CD4-positive, alpha-beta T cell (primary cell): ENCODE measurements at regions of chr19 and their contacts with region 1.

Region 1: DNA sequence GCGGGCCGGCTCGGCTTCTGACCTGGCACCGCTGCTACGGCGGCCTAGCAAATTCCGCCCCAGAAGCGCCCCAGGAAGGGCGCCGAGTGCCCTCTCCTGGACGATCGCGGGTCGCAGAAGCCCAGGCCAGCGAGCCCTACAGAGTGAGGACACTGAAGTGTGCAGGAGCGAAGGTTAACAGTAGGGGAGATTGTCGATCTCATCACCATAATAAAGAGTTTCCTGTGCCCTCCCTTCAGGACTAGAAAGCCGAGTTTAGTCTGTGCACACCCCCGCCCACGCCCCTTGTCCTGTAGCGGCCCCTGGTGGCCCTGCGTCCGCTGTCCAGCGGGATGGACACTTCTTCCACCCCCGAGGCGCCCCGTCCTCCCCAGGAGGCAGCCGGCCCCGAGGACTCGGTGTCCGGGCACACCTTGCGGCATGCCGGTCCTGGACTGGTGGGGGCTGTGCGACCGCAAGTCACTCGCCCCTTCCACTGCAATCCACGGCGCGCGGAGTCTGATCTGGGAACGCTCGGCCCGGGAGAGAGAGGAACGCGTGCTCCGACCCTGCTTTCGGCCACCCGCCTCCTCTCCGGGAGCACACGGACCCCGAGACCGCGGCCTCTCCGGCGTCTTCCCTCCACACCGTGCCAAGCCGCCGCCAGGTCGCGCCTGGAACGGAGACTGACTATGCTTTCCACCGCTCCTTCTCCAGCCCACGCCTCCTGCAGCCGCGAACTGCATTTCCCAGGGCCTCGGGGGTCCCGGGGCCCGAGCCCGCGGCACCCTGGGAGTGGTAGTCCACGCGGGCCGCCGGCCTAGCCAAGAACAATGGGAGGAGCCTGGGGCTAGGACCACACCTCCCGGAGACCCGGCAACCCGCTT is 769 bp upstream of the KMT2B start:
- DNase-seq: peak; percentile 92 to 99 (median 96)
- ATAC-seq: peak; percentile 85
- H3K4me3 ChIP-seq: peak overlapping the region; percentile 96
- H3K4me3 Mint-ChIP-seq: peak overlapping the region; percentile 93
- H3K27ac ChIP-seq: peak overlapping the region; percentile 73 to 76
- H3K27ac Mint-ChIP-seq: peak overlapping the region; percentile 89
- H3K4me1 ChIP-seq: peaks cover 71% of the 10 kb centered on the region
- H3K4me1 Mint-ChIP-seq: peaks cover 70% of the 10 kb centered on the region
- H3K27me3 ChIP-seq: no peaks in the 10 kb centered on the region
- H3K27me3 Mint-ChIP-seq: no peaks in the 10 kb centered on the region
- CTCF ChIP-seq: peak; percentile 95

Region 2: DNA sequence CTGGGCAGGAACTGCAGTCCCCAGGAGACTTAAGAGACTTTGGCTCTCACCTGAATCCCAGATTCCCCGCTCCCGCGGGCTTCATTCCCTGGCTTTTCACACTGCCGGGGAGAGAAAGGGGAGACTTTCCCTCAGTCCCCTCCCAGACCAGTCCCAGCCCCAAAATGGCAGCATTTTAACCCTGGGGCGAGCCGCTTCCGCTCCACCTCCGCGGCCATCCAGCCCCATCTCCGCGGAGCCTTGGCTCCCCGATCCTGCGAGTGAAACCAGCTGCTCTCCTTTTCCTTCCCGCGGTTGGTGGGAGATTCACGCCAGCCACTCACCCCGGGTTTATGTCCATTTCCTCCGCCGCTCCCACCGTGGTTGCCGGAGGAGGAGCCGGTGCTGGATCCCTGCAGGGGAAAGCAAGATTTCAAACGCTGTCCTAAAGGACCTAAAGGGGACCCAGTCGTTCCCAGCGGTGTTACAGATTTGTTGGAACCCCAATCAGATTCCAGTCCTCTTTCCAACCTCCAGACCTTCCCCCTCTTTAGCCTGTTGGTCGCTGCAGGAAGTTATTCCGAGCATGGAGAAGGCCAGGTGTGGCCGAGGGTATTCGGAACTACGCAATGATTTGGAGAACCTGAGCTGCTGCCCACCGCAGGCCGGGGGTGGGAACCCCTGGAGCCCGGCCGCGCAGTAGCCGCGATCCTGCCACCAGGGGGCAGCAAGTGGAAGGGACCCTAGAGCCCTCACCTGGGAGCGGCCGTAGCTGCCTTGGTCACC is 207.0 kb before region 1 on chr19:
- CTCF ChIA-PET with region 1: no interaction called
- POLR2A ChIA-PET with region 1: no interaction called
- intact Hi-C with region 1: loop called in 1 of 2 experiments (anchors 1 kb)
- DNase-seq: peak; percentile 53 to 82 (median 64)
- ATAC-seq: peak; percentile 74
- H3K4me3 ChIP-seq: peak overlapping the region; percentile 52
- H3K4me3 Mint-ChIP-seq: peak overlapping the region; percentile 72
- H3K27ac ChIP-seq: no peak overlapping the region
- H3K27ac Mint-ChIP-seq: no peak overlapping the region
- H3K4me1 ChIP-seq: peaks cover 20% of the 10 kb centered on the region
- H3K4me1 Mint-ChIP-seq: peaks cover 17% of the 10 kb centered on the region
- H3K27me3 ChIP-seq: peaks cover 26 to 31% of the 10 kb centered on the region in 2 experiments
- H3K27me3 Mint-ChIP-seq: peaks cover 81% of the 10 kb centered on the region
- CTCF ChIP-seq: peak; percentile 86

Region 3: DNA sequence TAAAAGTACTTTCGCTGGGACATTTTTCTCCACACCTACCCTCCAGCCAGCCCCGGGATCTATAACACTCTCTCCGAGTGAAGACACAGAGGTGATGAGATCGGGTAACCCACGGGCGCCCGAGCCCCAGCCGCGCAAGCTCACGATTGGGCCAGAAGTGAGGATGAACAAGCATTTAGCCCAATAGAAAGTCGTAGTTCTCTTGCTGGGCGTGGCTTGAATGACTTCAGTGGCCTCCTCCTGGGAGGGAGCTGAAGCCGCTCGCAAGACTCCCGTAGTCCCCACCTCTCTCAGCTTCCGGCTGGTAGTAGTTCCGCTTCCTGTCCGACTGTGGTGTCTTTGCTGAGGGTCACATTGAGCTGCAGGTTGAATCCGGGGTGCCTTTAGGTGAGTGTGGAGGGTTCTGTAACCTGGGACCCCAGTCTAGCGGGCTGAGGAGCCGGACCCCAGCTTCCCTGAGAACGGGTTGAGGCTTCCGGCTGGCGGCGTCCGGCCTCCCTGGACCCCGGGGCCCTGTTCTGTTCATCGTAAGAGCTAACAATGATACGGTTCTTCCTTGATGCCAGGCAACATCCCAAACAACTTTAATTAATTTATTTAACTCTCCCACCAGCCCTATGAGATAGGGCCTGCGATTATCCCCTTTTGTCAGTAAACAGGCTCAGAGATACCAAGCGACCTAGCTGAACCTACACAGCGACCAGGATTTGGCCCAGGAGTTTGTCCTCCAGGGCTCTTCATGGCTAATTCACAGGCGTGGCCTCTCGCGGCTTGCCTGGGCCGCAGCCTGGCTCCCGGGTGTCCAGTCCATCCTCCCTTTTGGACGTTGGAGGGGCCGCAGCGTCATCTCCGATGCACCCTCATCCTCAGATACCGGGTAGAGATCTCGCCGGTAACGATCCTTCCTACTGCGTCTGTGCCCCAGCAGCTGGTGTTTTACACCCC is 68.7 kb before region 1 on chr19 and contains the start of gene COX6B1:
- CTCF ChIA-PET with region 1: no interaction called
- POLR2A ChIA-PET with region 1: interaction called, 4 read pairs
- intact Hi-C with region 1: loop called in 1 of 2 experiments (anchors 5 kb)
- DNase-seq: peak; percentile 80 to 98 (median 86)
- ATAC-seq: peak; percentile 74
- H3K4me3 ChIP-seq: peak within 1 kb of the TSS; percentile 82
- H3K4me3 Mint-ChIP-seq: peak within 1 kb of the TSS; percentile 99
- H3K27ac ChIP-seq: peak within 1 kb of the TSS; percentile 42 to 63
- H3K27ac Mint-ChIP-seq: peak within 1 kb of the TSS; percentile 99
- H3K4me1 ChIP-seq: peaks cover 60% of the 10 kb centered on the region
- H3K4me1 Mint-ChIP-seq: peaks cover 53% of the 10 kb centered on the region
- H3K27me3 ChIP-seq: no peaks in the 10 kb centered on the region
- H3K27me3 Mint-ChIP-seq: no peaks in the 10 kb centered on the region
- CTCF ChIP-seq: no peak
- total RNA-seq, gene COX6B1: 136 to 144 TPM

Region 4: DNA sequence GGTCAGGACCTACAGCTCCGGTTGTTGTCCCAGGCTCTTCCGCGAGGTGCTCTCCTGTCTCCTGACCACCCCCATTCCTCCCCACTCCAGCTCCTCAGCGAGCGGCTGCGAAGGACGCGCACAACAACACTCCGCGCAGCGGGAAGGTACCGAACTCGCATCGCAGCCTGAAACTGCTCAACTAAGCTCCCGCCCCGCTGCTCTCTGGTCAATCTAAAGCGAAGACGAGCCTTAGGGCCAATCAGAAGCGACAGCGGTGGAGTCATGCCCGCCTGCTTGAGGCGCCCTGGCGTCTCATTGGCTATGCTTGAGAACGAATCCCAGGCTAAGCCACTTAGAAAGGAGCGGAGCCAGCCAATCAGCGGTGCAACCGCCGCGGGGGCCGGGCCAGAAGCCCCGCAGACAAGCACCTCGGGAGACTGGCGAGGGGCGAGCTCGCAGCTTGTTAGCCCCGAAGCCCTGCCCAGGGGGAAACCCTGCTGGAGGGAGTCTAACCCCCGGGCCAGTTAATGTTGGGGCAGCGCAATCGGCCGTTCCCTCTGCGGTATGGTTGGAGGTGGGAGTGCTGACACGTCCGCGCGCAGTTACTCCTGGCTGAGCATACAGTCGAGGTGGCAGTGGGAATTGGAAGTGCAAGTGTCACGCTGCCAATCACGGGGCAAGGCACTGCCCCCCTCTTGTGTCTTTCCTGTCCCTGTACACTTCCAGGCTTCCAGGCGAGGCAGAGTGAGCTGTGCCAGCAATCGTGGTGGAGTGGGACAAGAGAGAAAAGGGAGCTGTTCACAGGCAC is 14.6 kb before region 1 on chr19:
- CTCF ChIA-PET with region 1: interaction called, 3 read pairs
- POLR2A ChIA-PET with region 1: interaction called, 63 read pairs
- intact Hi-C with region 1: loop called in 1 of 2 experiments (anchors 1 kb)
- DNase-seq: peak; percentile 83 to 97 (median 89)
- ATAC-seq: peak; percentile 99
- H3K4me3 ChIP-seq: peak overlapping the region; percentile 83
- H3K4me3 Mint-ChIP-seq: peak overlapping the region; percentile 94
- H3K27ac ChIP-seq: no peak overlapping the region
- H3K27ac Mint-ChIP-seq: peak overlapping the region; percentile 70
- H3K4me1 ChIP-seq: peaks cover 19% of the 10 kb centered on the region
- H3K4me1 Mint-ChIP-seq: peaks cover 7% of the 10 kb centered on the region
- H3K27me3 ChIP-seq: no peaks in the 10 kb centered on the region
- H3K27me3 Mint-ChIP-seq: no peaks in the 10 kb centered on the region
- CTCF ChIP-seq: no peak

Region 5: DNA sequence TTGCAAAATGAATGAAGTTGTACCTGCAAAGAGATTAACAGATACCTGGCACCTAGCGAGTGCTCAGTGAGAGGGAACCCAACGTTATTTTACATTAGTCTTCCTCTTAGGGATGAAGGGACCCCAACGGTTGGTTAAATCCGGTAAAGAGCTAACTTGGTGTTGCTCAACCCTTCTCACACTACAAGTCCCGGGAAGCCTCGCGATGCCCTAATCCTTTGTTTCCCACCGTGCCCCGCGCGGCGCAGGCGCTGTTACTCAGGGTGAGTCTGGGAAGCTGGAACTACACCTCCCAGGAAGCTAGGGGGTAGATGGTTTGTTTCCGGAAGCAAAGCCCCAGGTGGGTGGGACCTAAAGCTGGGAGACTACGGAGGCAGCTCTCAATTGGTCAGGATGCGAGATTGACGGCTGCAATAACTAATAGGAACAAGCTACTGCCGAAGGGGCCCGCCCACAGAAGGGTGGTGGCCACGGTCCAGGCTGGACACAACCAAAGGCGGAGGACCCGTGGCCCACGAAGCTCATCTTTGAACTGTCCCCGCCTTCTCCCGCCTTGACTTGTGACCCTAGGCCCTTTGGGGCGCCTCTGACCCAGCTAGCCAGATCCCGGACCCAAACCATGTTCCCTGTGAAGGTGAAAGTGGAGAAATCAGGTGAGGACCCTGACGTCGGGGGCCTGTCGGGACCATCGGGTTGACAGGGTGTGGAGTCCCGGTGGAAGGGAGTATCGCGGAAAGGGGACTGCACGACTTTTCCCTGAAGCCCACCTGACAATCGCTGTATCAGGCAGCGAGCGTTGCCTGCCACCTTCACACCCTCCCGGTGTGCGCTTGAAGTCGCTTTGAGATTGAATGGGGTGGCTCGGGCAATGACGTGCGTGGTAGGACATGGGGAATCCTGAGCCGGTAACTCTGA is 31.3 kb after region 1 on chr19 and contains the start of gene LIN37:
- CTCF ChIA-PET with region 1: interaction called, 3 read pairs
- POLR2A ChIA-PET with region 1: interaction called, 13 read pairs
- intact Hi-C with region 1: loop called (anchors 1 to 2 kb)
- DNase-seq: peak; percentile 95 to 100 (median 98)
- ATAC-seq: peak; percentile 70
- H3K4me3 ChIP-seq: peak within 1 kb of the TSS; percentile 94
- H3K4me3 Mint-ChIP-seq: peak within 1 kb of the TSS; percentile 98
- H3K27ac ChIP-seq: peak within 1 kb of the TSS; percentile 61 to 75
- H3K27ac Mint-ChIP-seq: peak within 1 kb of the TSS; percentile 89
- H3K4me1 ChIP-seq: peaks cover 49% of the 10 kb centered on the region
- H3K4me1 Mint-ChIP-seq: peaks cover 37% of the 10 kb centered on the region
- H3K27me3 ChIP-seq: no peaks in the 10 kb centered on the region
- H3K27me3 Mint-ChIP-seq: no peaks in the 10 kb centered on the region
- CTCF ChIP-seq: no peak
- total RNA-seq, gene LIN37: 4.8 to 6.0 TPM

Region 6: GRCh38 chr19:35767288-35768081 is 50.5 kb after region 1 on chr19:
- CTCF ChIA-PET with region 1: no interaction called
- POLR2A ChIA-PET with region 1: no interaction called
- intact Hi-C with region 1: no loop called
- DNase-seq: no peak
- ATAC-seq: no peak
- H3K4me3 ChIP-seq: no peak overlapping the region
- H3K4me3 Mint-ChIP-seq: no peak overlapping the region
- H3K27ac ChIP-seq: no peak overlapping the region
- H3K27ac Mint-ChIP-seq: no peak overlapping the region
- H3K4me1 ChIP-seq: no peaks in the 10 kb centered on the region
- H3K4me1 Mint-ChIP-seq: no peaks in the 10 kb centered on the region
- H3K27me3 ChIP-seq: no peaks in the 10 kb centered on the region
- H3K27me3 Mint-ChIP-seq: no peaks in the 10 kb centered on the region
- CTCF ChIP-seq: no peak

Region 7: GRCh38 chr19:35931161-35931873 is 214.3 kb after region 1 on chr19:
- CTCF ChIA-PET with region 1: interaction called, 4 read pairs
- POLR2A ChIA-PET with region 1: no interaction called
- intact Hi-C with region 1: loop called (anchors 1 kb)
- DNase-seq: peak; percentile 97 to 100 (median 99)
- ATAC-seq: peak; percentile 95
- H3K4me3 ChIP-seq: peak overlapping the region; percentile 42
- H3K4me3 Mint-ChIP-seq: peak overlapping the region; percentile 83
- H3K27ac ChIP-seq: peak overlapping the region; percentile 59 to 78
- H3K27ac Mint-ChIP-seq: peak overlapping the region; percentile 90
- H3K4me1 ChIP-seq: peaks cover 49% of the 10 kb centered on the region
- H3K4me1 Mint-ChIP-seq: peaks cover 36% of the 10 kb centered on the region
- H3K27me3 ChIP-seq: no peaks in the 10 kb centered on the region
- H3K27me3 Mint-ChIP-seq: no peaks in the 10 kb centered on the region
- CTCF ChIP-seq: peak; percentile 84